AG04450 (cell line): ENCODE measurements at regions of chr11 and their contacts with region 1.

Region 1: DNA sequence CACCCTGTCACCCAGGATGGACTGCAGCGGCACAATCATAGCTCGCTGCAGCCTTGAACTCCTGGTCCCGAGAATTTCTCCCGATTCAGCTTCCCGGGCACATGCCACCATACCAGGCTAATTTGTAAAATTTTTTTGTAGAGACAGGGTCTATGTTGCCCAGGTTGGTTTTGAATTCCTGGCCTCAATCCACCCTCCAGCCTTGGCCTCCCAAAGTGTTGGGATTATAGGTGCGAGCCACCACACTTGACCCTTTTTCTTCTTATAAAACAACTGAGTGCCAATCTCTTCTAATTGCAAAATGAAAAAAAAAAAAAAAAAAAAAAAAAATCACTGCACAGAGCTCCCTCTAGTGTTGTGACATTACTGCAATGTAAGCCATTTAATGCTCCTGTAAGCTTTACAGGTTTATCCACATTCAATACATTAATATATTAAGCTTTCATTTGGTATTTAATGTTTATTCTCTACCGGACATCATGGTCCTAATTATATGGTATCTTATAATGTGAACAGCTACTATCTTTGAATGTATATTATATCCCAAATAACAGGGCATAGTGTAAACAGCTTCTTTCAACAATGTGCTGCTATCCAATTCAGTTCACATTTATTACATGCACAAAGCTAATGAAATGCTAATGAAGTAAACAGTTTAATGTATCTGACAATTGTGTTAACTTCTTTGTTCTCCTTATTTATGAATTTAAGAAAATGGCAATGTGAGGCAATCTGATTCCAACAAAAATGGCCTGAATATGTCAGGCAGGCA is 44.6 kb downstream of the COPB1 start:
- DNase-seq: no peak
- H3K4me3 ChIP-seq: no peak overlapping the region
- H3K27ac ChIP-seq: no peak overlapping the region
- H3K27me3 ChIP-seq: no peaks in the 10 kb centered on the region
- CTCF ChIP-seq: peak; percentile 70

Region 2: GRCh38 chr11:14010665-14011064 is 444.4 kb before region 1 on chr11:
- CTCF ChIA-PET with region 1: no interaction called
- POLR2A ChIA-PET with region 1: no interaction called
- DNase-seq: no peak
- H3K4me3 ChIP-seq: no peak overlapping the region
- H3K27ac ChIP-seq: no peak overlapping the region
- H3K27me3 ChIP-seq: no peaks in the 10 kb centered on the region
- CTCF ChIP-seq: no peak

Region 3: DNA sequence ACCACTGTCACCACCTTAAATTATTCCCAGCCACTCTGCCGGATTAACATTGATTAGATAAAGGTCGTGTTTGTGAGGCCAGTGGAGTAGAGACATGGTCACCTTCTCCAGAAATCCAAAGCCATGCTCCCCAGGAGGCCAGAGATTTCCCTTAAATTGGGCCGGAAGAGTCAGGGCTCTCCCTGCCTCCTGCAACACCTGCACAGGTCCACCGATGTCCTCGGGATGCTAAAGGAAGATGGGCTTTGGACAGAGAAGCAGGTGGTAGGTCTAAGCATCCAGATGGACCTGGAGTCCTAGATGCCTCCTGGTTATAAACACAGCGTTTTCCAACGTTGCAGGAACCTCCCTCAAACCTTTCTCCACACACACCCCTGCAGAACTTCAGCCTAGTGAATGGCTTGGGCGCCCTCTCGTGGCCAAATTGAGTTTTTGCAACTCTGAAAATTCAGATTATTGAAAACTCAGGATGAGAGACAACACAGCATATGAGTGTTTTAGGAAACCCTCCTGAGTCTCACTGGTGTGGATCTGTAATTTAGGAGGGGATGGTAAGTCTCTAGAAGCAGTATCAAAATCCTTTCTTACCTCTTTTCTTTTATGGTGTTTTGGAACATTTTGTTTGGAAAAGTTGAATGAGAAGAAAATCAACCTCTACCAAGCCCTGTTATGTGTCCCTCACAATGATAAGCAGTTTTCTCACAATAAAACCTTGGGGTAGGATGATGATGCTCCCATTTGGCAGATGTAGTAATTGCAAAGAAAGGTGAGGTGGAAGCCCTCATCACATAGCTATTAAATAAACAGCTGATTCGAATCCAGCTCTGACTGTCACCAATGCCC is 205.7 kb before region 1 on chr11:
- CTCF ChIA-PET with region 1: interaction called, 18 read pairs
- POLR2A ChIA-PET with region 1: no interaction called
- DNase-seq: peak; percentile 15
- H3K4me3 ChIP-seq: no peak overlapping the region
- H3K27ac ChIP-seq: no peak overlapping the region
- H3K27me3 ChIP-seq: peaks cover 44% of the 10 kb centered on the region
- CTCF ChIP-seq: peak; percentile 87

Region 4: GRCh38 chr11:14275076-14275475 is 180.0 kb before region 1 on chr11:
- CTCF ChIA-PET with region 1: interaction called, 11 read pairs
- POLR2A ChIA-PET with region 1: interaction called, 3 read pairs
- DNase-seq: no peak
- H3K4me3 ChIP-seq: no peak overlapping the region
- H3K27ac ChIP-seq: no peak overlapping the region
- H3K27me3 ChIP-seq: no peaks in the 10 kb centered on the region
- CTCF ChIP-seq: no peak

Region 5: GRCh38 chr11:14308114-14308896 is 146.7 kb before region 1 on chr11:
- CTCF ChIA-PET with region 1: interaction called, 273 read pairs
- POLR2A ChIA-PET with region 1: interaction called, 7 read pairs
- DNase-seq: no peak
- H3K4me3 ChIP-seq: no peak overlapping the region
- H3K27ac ChIP-seq: no peak overlapping the region
- H3K27me3 ChIP-seq: no peaks in the 10 kb centered on the region
- CTCF ChIP-seq: peak; percentile 73

Region 6: DNA sequence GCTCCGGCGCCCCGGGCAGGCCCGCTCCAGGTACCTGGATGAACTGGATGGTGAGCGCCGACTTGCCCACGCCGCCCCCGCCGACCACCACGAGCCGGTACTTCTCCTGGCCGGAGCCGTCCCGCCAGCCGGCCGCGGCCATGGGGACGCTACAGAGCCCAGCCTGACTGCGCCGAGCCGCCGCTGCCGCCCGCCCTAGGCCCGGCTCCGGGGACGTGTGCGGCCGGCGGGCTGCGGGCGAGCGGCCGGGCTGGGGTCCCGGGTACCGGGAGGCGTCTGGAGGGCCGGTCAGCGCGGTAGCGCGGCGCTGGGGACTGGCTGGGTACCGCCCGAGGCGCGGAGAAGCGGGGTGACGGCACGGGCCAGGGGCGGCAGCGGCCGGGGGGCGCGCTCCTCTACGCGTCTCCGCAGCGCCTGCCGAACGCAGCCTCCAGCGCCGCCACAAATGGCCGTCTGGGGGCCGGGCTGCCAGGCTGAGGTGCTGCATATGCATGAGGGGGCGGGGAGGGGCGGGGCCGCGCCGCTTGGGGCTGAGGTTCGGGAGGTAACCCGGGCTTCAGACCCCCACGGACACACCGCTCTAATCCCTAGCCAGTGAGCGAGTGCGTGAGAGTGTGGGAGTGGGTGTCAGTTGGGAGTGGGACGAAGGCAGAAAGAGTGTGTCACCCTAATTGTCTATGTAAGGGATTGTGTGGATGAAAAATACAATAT is 96.2 kb before region 1 on chr11 and contains the start of gene RRAS2:
- CTCF ChIA-PET with region 1: interaction called, 21 read pairs
- POLR2A ChIA-PET with region 1: interaction called, 4 read pairs
- DNase-seq: no peak
- H3K4me3 ChIP-seq: peak within 1 kb of the TSS; percentile 82
- H3K27ac ChIP-seq: peak within 1 kb of the TSS; percentile 57
- H3K27me3 ChIP-seq: no peaks in the 10 kb centered on the region
- CTCF ChIP-seq: no peak
- polyA plus RNA-seq, gene RRAS2: 74.5 and 95.8 TPM in 2 replicates

Region 7: DNA sequence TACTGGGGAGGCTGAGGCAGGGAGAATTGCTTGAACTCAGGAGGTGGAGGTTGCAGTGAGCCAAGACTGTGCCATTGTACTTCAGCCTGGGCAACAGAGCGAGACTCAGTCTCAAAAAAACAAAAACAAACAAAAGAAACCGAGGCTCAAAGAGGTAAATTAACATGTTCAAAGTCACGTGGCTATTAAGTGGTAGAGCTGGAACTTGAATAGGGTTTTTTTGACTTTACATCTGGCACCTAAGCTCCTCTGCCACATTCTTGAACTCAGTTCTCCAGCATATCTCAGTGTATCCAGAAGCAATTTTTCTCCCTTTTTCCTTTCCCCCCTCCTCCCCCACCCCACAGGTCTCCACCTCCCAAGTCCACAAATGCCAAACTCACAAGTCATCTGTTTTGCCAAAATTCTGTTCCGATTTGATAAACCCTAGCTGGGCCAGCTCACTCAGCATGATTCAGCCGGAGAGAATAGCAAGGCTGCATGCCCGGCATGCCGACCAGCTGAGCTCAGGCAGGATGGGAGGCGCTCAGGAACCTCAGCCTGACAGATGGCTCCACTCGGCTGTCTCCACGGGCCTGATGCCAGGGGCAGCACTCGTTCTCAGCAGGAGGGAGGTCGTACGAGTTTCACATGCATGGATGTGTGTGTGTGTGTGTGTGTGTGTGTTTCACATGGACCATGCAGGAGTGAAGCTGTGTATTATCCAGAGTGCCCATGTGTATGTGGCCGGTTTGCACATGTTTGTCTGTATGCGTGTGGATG is 32.8 kb before region 1 on chr11:
- CTCF ChIA-PET with region 1: interaction called, 27 read pairs
- POLR2A ChIA-PET with region 1: interaction called, 5 read pairs
- DNase-seq: peak; percentile 100
- H3K4me3 ChIP-seq: no peak overlapping the region
- H3K27ac ChIP-seq: peak overlapping the region; percentile 88
- H3K27me3 ChIP-seq: no peaks in the 10 kb centered on the region
- CTCF ChIP-seq: no peak

Region 8: GRCh38 chr11:14480716-14481115 is 25.7 kb after region 1 on chr11:
- CTCF ChIA-PET with region 1: interaction called, 24 read pairs
- POLR2A ChIA-PET with region 1: interaction called, 4 read pairs
- DNase-seq: no peak
- H3K4me3 ChIP-seq: no peak overlapping the region
- H3K27ac ChIP-seq: no peak overlapping the region
- H3K27me3 ChIP-seq: no peaks in the 10 kb centered on the region
- CTCF ChIP-seq: no peak